ENCODE measurements at regions of chr2 and their contacts with region 1.

Region 1: GRCh38 chr2:4765787-4766530 is 926.2 kb upstream of the SOX11 start:
- DNase-seq: no peak
- H3K4me3 ChIP-seq: no peak overlapping the region
- H3K27ac ChIP-seq: no peak overlapping the region
- H3K4me1 ChIP-seq: no peaks in the 10 kb centered on the region
- H3K27me3 ChIP-seq: no peaks in the 10 kb centered on the region
- CTCF ChIP-seq: no peak
- EP300 ChIP-seq: no peak
- POLR2A ChIP-seq: no peak

Region 2: DNA sequence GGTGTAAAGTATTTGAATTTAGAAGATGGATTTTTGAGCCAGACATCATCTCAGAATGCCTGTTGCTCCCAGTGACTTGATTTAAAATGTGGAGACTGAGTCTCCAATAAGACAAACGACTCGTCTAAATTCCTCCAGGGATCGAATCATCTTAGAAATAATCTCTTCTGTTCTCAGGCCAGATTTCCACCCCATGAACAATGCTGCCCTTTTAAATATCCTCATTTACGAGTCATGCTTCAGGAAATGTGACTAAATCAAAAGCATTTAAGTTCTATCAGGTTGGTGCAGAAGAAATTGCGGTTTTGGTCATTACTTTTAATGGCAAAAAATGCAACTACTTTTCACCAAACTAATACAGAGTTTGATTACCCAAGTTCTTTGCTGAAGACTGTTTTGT is 241.6 kb after region 1 on chr2:
- in situ Hi-C with region 1: no loop called
- intact Hi-C with region 1: no loop called
- DNase-seq: no peak
- H3K4me3 ChIP-seq: no peak overlapping the region
- H3K27ac ChIP-seq: no peak overlapping the region
- H3K4me1 ChIP-seq: no peaks in the 10 kb centered on the region
- H3K27me3 ChIP-seq: no peaks in the 10 kb centered on the region
- CTCF ChIP-seq: no peak
- EP300 ChIP-seq: no peak
- POLR2A ChIP-seq: no peak

Region 3: DNA sequence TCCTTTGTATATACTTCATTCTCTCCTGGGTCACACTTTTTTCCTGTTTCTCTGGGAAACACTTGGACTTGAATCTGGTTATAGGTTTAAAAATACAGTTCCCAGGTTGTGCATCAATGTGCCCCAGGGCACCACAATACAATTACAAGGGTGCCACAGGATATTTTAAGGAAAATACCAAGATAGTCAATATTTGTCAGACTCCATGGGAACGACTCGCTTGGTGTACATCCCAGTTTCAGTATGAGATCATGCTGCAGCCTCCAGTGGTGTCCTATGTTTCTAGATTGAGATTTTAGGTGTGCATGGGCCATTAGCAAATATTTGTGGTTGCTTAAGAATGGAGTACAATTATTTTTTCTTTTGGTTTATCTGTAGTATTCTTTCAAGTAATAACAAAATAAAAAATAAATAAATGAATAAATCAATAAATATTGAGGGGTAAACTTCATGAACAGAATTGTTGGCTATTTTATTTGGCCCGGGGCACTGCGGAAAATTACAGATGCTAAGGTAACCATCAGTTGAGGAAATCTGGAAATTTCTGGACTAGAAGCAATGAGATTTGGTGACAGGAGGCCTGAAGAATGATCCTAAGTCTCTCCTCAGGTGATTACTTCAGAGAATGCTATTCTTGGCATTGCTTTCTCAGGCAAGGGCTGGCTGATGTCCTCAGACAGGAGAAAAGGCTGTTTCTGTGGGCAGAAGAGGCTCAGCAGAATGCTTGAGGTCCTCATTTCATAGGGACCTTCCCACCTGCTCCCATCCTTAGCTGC is 276.9 kb after region 1 on chr2:
- in situ Hi-C with region 1: no loop called
- intact Hi-C with region 1: loop called (anchors 5 kb)
- DNase-seq: no peak
- H3K4me3 ChIP-seq: no peak overlapping the region
- H3K27ac ChIP-seq: no peak overlapping the region
- H3K4me1 ChIP-seq: no peaks in the 10 kb centered on the region
- H3K27me3 ChIP-seq: no peaks in the 10 kb centered on the region
- CTCF ChIP-seq: no peak
- EP300 ChIP-seq: no peak
- POLR2A ChIP-seq: no peak